ENCODE measurements at regions of chr10 and their contacts with region 1.

Region 1: DNA sequence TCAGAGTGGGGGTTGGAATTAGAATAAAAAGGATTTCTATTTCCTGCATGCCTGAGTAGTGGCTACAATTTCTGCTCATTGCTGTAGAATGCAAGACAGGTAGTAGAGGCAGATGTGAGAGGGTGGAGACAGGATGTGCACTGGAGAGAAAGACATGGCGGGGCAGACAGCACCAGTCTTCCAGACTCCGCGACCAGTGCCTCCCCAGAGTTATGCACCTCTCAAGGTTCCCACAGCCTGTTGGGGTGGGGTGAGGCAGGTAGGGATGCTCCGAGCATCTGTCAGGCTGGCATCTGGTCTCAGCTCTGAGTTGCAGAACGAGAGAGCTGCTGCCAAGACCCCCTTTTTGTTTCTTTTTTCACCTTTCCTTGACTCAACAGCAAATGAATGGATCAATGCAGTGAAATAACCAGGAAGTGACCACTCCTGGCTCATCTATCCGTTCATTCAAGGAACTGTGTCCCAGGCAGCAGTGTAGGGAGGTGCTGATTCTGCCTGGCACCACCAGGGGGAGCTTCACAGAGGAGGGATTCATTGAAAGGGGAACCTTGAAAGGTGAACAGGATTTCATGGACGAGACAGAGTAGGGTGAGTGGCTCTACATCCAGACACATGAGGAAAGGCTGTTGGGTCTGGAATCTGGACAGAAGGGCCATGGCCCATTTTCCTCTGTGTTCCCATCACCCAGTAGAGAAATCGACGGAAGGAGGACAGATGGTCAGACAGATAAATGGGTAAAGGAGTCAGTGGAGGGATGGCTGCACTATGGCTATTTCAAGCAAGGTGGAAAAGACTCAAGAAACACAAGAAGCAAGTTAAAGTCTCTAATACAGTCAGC is 17.2 kb upstream of the SLC18A3 start:
- DNase-seq: peak; percentile 37
- ATAC-seq: peak; percentile 81
- H3K4me3 Mint-ChIP-seq: no peak overlapping the region
- H3K27ac Mint-ChIP-seq: no peak overlapping the region
- H3K4me1 Mint-ChIP-seq: no peaks in the 10 kb centered on the region
- H3K27me3 Mint-ChIP-seq: peaks cover 22% of the 10 kb centered on the region
- CTCF ChIP-seq: peak; percentile 44

Region 2: GRCh38 chr10:50224330-50224952 is 631.5 kb after region 1 on chr10:
- CTCF ChIA-PET with region 1: interaction called, 10 read pairs
- POLR2A ChIA-PET with region 1: no interaction called
- intact Hi-C with region 1: no loop called
- DNase-seq: no peak
- ATAC-seq: peak; percentile 69
- H3K4me3 Mint-ChIP-seq: no peak overlapping the region
- H3K27ac Mint-ChIP-seq: no peak overlapping the region
- H3K4me1 Mint-ChIP-seq: no peaks in the 10 kb centered on the region
- H3K27me3 Mint-ChIP-seq: peaks cover 9% of the 10 kb centered on the region
- CTCF ChIP-seq: no peak